GM12878 (cell line): ENCODE measurements at regions of chr2 and their contacts with region 1.

Region 1: DNA sequence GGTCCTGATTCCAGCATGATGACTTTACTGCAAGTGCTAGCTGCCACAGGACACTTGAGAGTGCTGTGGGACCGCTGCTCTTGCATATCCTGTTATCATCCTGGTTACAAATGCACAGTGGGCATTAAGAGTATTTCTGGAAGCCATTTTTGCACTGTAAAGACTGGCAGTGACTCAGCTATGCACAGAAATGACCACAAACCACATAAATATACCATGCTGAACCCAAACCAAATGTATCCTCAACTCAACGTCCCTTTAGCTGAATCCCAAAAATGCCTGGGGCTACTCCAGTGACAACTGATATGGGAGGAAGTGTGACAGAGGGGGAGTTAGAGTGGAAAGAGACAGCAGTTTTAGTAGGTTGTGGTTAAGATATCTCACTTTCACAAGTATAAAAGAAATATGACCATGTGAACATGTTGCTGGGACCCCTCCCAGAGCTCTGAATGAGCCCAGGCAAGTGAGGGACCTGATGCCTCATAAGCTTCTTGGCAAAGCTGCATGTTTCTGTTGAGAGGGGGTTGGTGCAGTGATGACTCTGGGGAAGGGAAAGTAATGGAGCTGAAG is 37.3 kb downstream of the RHBDD1 start:
- DNase-seq: no peak
- ATAC-seq: peak; percentile 83
- H3K4me3 ChIP-seq: peak overlapping the region; percentile 17; the same call in 1 of the 2 replicates
- H3K27ac ChIP-seq: peak overlapping the region; percentile 65
- H3K4me1 ChIP-seq: peaks cover 11% of the 10 kb centered on the region
- H3K27me3 ChIP-seq: no peaks in the 10 kb centered on the region
- CTCF ChIP-seq: peak in 2 of 3 experiments; percentile 9 to 11; a peak in 1 of 6 replicates
- EP300 ChIP-seq: no peak
- POLR2A ChIP-seq: no peak
- RAD21 ChIP-seq: peak; percentile 36

Region 2: DNA sequence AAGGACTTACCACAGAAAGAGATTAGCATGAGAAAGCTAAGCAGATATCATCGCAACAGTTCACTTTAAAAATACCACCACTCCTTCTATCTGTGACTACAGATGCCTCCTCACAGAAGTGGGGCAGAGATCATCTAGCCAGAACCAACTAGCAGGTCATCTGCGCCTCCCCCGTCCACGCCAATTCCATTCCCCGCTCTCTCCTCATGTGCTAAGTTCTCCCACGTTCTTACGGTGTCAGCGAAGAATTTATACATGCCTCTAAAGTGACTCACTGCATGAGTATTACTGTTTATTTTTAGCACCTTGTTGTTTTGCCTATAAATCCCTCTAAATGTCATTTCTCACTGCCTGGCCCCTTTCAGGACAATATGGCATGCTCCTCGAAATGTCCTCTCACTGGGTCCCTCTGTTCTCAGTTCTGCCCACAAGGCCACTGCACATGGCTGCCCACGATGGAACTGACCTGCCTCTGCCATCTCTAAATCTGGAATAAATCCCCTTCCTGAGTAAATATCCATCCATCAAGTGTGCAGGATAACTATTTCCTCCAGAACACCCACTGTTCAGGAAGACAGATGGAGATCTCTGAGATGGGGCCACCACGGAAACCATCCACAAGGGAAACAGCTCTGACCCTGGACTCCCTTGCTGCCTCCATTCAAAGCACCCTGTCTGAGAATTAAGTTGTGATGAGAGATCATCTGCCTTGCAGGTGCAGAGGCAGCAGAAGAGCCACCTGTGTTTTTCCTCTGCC is 211.2 kb before region 1 on chr2:
- CTCF ChIA-PET with region 1: no interaction called
- POLR2A ChIA-PET with region 1: no interaction called
- RAD21 ChIA-PET with region 1: no interaction called
- SMC1A ChIA-PET with region 1: no interaction called
- in situ Hi-C with region 1: no loop called
- intact Hi-C with region 1: no loop called
- DNase-seq: no peak
- ATAC-seq: no peak
- H3K4me3 ChIP-seq: no peak overlapping the region
- H3K27ac ChIP-seq: no peak overlapping the region
- H3K4me1 ChIP-seq: no peaks in the 10 kb centered on the region
- H3K27me3 ChIP-seq: no peaks in the 10 kb centered on the region
- CTCF ChIP-seq: no peak
- EP300 ChIP-seq: no peak
- POLR2A ChIP-seq: no peak
- RAD21 ChIP-seq: no peak

Region 3: GRCh38 chr2:226845386-226846116 is 27.6 kb before region 1 on chr2:
- CTCF ChIA-PET with region 1: interaction called, 5 read pairs
- POLR2A ChIA-PET with region 1: interaction called, 3 read pairs
- RAD21 ChIA-PET with region 1: no interaction called
- SMC1A ChIA-PET with region 1: interaction called, 14 read pairs
- in situ Hi-C with region 1: no loop called
- intact Hi-C with region 1: no loop called
- DNase-seq: no peak
- ATAC-seq: peak; percentile 75
- H3K4me3 ChIP-seq: peak overlapping the region; percentile 39; the same call in 1 of the 2 replicates
- H3K27ac ChIP-seq: peak overlapping the region; percentile 65
- H3K4me1 ChIP-seq: peaks cover 22% of the 10 kb centered on the region
- H3K27me3 ChIP-seq: no peaks in the 10 kb centered on the region
- CTCF ChIP-seq: no peak
- EP300 ChIP-seq: no peak
- POLR2A ChIP-seq: no peak
- RAD21 ChIP-seq: no peak

Region 4: DNA sequence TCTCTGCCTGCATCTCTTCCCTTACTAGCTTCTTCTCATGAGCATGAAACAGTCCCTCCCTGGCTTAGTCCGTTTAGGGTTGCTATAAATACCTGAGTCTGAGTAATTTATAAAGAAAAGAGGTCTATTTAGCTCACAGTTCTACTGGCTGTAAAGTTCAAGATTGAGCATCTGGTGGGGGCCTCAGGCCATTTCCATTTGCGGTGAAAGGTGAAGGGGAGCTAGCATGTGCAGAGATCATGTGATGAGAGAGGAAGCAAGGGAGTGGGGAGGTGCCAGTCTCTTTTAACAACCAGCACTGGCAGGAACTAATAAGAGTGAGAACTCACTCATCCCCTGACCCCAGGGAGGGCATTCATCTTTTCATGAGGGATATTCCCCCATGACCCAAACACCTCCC is 10.5 kb before region 1 on chr2:
- CTCF ChIA-PET with region 1: interaction called, 13 read pairs
- POLR2A ChIA-PET with region 1: interaction called, 4 read pairs
- RAD21 ChIA-PET with region 1: interaction called, 4 read pairs
- SMC1A ChIA-PET with region 1: interaction called, 30 read pairs
- in situ Hi-C with region 1: no loop called
- intact Hi-C with region 1: no loop called
- DNase-seq: peak; percentile 51
- ATAC-seq: peak; percentile 88
- H3K4me3 ChIP-seq: no peak overlapping the region; the same call in 1 of the 2 replicates
- H3K27ac ChIP-seq: peak overlapping the region; percentile 54
- H3K4me1 ChIP-seq: peaks cover 23% of the 10 kb centered on the region
- H3K27me3 ChIP-seq: no peaks in the 10 kb centered on the region
- CTCF ChIP-seq: no peak
- EP300 ChIP-seq: no peak
- POLR2A ChIP-seq: no peak
- RAD21 ChIP-seq: peak; percentile 20; the same call in 1 of the 2 replicates

Region 5: GRCh38 chr2:226906163-226906693 is 33.1 kb after region 1 on chr2:
- CTCF ChIA-PET with region 1: interaction called, 7 read pairs
- POLR2A ChIA-PET with region 1: no interaction called
- RAD21 ChIA-PET with region 1: interaction called, 3 read pairs
- SMC1A ChIA-PET with region 1: interaction called, 3 read pairs
- in situ Hi-C with region 1: no loop called
- intact Hi-C with region 1: loop called (anchors 1 kb)
- DNase-seq: peak; percentile 82
- ATAC-seq: peak; percentile 91
- H3K4me3 ChIP-seq: peak overlapping the region; percentile 53
- H3K27ac ChIP-seq: peak overlapping the region; percentile 84
- H3K4me1 ChIP-seq: peaks cover 48% of the 10 kb centered on the region
- H3K27me3 ChIP-seq: no peaks in the 10 kb centered on the region
- CTCF ChIP-seq: no peak
- EP300 ChIP-seq: 0 out of 4 replicates have a peak, but pooled peaks of 1 of the 2 experiments have one; percentile 25
- POLR2A ChIP-seq: no peak
- RAD21 ChIP-seq: no peak